CD4-positive, alpha-beta memory T cell (primary cell): ENCODE measurements at regions of chr17 and their contacts with region 1.

Region 1: DNA sequence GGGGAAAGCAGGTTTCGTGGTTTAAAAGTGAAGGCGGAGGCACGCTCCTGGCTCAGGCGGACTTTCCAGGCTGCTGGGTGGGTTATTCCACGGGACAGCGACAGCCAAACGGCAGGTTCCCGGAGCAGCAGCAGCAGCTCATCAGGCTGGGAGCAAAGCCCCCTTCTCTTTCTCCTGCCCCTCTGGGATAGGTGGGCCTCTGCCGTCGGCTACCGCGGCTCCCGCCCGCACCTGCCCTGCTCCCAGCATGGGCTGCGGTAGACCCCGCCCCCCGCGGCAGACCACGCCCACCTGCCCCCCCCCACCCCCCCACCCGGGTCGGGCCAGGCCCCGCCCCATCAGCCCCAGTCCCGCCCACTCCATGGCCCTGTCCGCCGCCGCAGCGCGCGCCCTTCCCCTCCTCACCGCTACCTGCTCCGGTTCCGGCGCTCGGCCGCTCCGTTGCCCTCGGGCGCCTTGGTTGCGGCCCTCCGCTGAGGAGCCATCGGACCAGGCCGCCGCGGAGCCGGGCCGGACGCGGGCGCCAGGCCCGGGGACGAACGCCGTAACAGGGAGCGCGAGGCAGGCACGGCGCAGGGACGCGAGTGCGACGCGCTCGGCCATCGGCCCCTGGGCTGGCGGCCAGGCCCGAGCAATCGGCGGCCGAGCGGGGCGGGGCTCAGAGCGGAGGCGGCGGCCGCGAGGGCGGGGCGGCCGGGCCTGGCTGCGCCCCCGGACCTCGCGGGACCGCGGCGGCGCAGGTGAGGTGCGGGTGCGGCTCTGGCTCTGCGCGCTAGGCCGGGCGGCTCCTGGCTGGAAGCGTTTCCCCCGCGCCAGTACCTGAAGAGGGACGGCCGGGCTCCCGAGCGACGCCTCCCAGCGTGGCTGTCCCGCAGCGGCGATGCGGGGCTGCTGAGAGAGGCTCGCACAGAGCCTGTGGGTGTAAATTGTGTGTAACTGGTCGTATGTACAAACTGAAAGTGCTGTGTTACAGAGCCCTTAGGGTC is at the starts of genes HEXD and OGFOD3:
- DNase-seq: peak; percentile 82 to 96 (median 92)
- H3K4me3 ChIP-seq: peak within 1 kb of the TSS; percentile 55 to 58
- H3K4me3 Mint-ChIP-seq: peak within 1 kb of the TSS; percentile 82 to 90 (median 85)
- H3K27ac ChIP-seq: peak within 1 kb of the TSS; percentile 66
- H3K27ac Mint-ChIP-seq: peak within 1 kb of the TSS; percentile 75 to 91 (median 84)
- H3K4me1 ChIP-seq: peaks cover 32% of the 10 kb centered on the region
- H3K4me1 Mint-ChIP-seq: peaks cover 22 to 39% (median 27%) of the 10 kb centered on the region in 4 donors
- H3K27me3 ChIP-seq: no peaks in the 10 kb centered on the region
- H3K27me3 Mint-ChIP-seq: no peaks in the 10 kb centered on the region
- total RNA-seq, gene HEXD: 105 to 113 TPM
- total RNA-seq, gene OGFOD3: 28.8 to 30.3 TPM

Region 2: DNA sequence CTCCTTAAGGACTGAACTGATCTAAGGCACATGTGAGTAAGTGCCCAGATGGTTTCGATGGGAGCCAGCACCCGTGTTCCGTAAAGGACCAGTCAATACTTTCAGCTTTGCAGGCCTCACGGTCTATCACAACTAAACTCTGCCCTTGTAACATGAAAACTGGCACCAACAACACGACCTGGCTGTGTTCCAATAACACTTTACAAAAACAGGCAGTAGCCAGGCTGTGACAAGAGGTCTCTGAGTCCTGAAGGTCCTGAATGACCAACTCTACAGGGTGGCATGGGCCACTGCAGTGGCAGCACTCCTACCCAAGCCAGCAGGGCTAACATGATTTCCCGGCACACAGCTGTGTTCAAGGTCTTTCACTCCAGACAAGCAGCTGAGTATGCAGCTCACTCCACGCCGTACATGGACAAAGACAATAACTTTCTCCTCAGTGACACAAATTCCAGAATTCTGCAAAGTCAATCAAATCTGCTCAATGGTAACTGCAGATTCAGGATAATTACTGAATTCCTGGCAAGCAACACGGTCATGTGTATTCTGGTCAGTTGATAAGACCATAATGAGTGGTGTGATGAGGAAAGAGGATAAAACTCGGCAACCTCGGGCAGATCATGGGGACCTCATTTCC is 796.7 kb before region 1 on chr17:
- CTCF ChIA-PET with region 1: no interaction called
- POLR2A ChIA-PET with region 1: no interaction called
- intact Hi-C with region 1: no loop called
- DNase-seq: no peak
- H3K4me3 ChIP-seq: no peak overlapping the region
- H3K4me3 Mint-ChIP-seq: no peak overlapping the region
- H3K27ac ChIP-seq: no peak overlapping the region
- H3K27ac Mint-ChIP-seq: no peak overlapping the region
- H3K4me1 ChIP-seq: no peaks in the 10 kb centered on the region
- H3K4me1 Mint-ChIP-seq: peaks cover 0 to 22% (median 12%) of the 10 kb centered on the region in 4 donors
- H3K27me3 ChIP-seq: no peaks in the 10 kb centered on the region
- H3K27me3 Mint-ChIP-seq: no peaks in the 10 kb centered on the region

Region 3: DNA sequence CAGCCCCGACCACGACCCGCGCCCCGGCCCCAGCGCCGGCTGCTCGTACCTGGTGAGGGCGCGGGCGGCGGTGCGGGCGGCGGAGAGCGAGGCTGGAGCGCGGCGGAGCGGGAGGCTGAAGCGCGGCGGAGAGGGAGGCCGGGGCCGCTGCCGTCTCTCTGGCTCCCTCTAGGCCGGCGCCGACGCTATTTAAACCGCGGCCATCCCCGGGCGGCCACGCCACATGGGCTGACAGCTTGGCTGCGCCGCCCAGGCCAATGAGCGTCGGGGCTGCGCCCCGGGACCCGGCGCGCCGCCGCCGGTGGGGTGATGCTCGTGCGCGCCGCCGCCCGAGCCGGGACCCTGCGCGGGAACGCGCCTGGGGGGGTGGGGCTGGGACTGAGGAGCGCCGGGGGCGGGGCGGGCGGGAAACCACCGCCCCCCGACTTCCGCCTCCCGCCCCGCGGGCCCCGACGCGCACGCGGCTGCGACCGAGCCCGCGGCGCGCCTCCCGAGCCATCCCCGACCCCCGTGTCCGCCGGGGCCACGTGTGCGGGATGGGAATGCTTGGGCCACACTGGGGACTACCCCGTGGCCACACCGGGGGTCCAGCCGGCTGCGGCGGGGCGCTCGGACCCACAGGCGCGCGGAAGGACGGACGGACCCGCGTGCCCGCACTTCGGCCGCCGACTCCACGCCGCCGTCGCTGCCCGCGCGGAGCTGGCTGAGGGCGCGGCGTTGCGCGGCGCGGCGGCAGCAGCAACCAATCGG is 320.0 kb before region 1 on chr17 and contains the start of gene FASN:
- CTCF ChIA-PET with region 1: no interaction called
- POLR2A ChIA-PET with region 1: no interaction called
- intact Hi-C with region 1: loop called (anchors 2 kb)
- DNase-seq: peak; percentile 88 to 94 (median 91)
- H3K4me3 ChIP-seq: peak within 1 kb of the TSS; percentile 23 to 66
- H3K4me3 Mint-ChIP-seq: peak within 1 kb of the TSS; percentile 35 to 82 (median 68)
- H3K27ac ChIP-seq: peak within 1 kb of the TSS; percentile 78
- H3K27ac Mint-ChIP-seq: peak within 1 kb of the TSS in 4 of 7 donors; percentile 22 to 86 (median 26)
- H3K4me1 ChIP-seq: peaks cover 20% of the 10 kb centered on the region
- H3K4me1 Mint-ChIP-seq: peaks cover 0 to 20% (median 2%) of the 10 kb centered on the region in 4 donors
- H3K27me3 ChIP-seq: no peaks in the 10 kb centered on the region
- H3K27me3 Mint-ChIP-seq: no peaks in the 10 kb centered on the region
- total RNA-seq, gene FASN: 26.5 to 27.7 TPM

Region 4: GRCh38 chr17:82236142-82236981 is 181.9 kb before region 1 on chr17:
- CTCF ChIA-PET with region 1: interaction called, 4 read pairs
- POLR2A ChIA-PET with region 1: no interaction called
- intact Hi-C with region 1: loop called (anchors 5 kb)
- DNase-seq: peak; percentile 69 to 74 (median 72)
- H3K4me3 ChIP-seq: no peak overlapping the region
- H3K4me3 Mint-ChIP-seq: peak overlapping the region in 1 of 8 donors; percentile 35
- H3K27ac ChIP-seq: peak overlapping the region; percentile 15
- H3K27ac Mint-ChIP-seq: peak overlapping the region in 5 of 7 donors; percentile 41 to 67 (median 64)
- H3K4me1 ChIP-seq: peaks cover 63% of the 10 kb centered on the region
- H3K4me1 Mint-ChIP-seq: peaks cover 10 to 58% (median 39%) of the 10 kb centered on the region in 4 donors
- H3K27me3 ChIP-seq: no peaks in the 10 kb centered on the region
- H3K27me3 Mint-ChIP-seq: no peaks in the 10 kb centered on the region

Region 5: DNA sequence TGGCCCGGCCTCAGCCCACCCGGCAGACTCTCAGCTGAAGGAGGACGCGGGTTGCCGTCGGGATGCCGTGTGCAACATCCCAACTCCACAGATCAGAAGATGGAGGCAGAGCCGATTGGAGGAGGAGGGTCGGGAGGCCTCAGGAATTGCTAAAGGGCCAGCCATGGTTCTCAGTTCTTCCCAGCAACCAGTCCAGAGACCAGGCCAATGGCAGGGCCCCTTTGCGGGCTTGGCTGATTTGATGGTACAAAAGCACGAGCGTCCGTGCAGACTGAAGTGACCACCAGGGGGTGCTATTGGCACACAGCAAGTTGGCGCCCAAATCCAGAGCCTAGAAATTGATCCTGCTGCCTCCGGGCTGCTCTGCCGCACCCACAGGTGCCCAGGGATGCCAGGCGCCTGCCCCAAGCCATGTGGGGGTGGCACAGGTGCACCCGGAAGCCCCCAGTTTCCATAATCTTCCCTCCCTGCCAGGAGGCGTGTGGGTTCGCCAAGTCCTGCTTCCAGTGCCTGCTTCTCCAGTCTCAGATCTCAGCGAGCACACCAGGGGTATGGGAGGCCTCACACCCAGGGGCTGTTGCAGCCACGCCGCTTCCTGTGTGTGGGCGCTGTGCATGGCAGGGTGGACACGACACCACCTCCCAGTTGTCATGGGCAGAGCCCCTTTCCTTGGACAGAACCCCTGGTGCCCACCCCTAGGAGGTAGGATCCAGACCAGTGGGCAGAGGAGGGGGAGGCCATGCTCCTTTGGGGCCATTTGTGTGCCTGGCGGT is 66.4 kb before region 1 on chr17:
- CTCF ChIA-PET with region 1: interaction called, 52 read pairs
- POLR2A ChIA-PET with region 1: no interaction called
- intact Hi-C with region 1: loop called (anchors 1 kb)
- DNase-seq: peak; percentile 77 to 81 (median 79)
- H3K4me3 ChIP-seq: no peak overlapping the region
- H3K4me3 Mint-ChIP-seq: no peak overlapping the region
- H3K27ac ChIP-seq: no peak overlapping the region
- H3K27ac Mint-ChIP-seq: peak overlapping the region in 1 of 7 donors; percentile 83
- H3K4me1 ChIP-seq: no peaks in the 10 kb centered on the region
- H3K4me1 Mint-ChIP-seq: peaks cover 0 to 6% (median 4%) of the 10 kb centered on the region in 4 donors
- H3K27me3 ChIP-seq: no peaks in the 10 kb centered on the region
- H3K27me3 Mint-ChIP-seq: peaks cover 2 to 10% of the 10 kb centered on the region in 2 donors

Region 6: GRCh38 chr17:82457997-82458864 is 39.9 kb after region 1 on chr17 and contains the start of gene NARF:
- CTCF ChIA-PET with region 1: interaction called, 4 read pairs
- POLR2A ChIA-PET with region 1: interaction called, 18 read pairs
- intact Hi-C with region 1: loop called (anchors 1 kb)
- DNase-seq: peak; percentile 95 to 97 (median 97)
- H3K4me3 ChIP-seq: peak within 1 kb of the TSS; percentile 29 to 59
- H3K4me3 Mint-ChIP-seq: peak within 1 kb of the TSS; percentile 84 to 96 (median 92)
- H3K27ac ChIP-seq: peak within 1 kb of the TSS; percentile 94
- H3K27ac Mint-ChIP-seq: peak within 1 kb of the TSS; percentile 94 to 100 (median 97)
- H3K4me1 ChIP-seq: peaks cover 31% of the 10 kb centered on the region
- H3K4me1 Mint-ChIP-seq: peaks cover 19 to 36% (median 26%) of the 10 kb centered on the region in 4 donors
- H3K27me3 ChIP-seq: no peaks in the 10 kb centered on the region
- H3K27me3 Mint-ChIP-seq: no peaks in the 10 kb centered on the region
- total RNA-seq, gene NARF: 80.8 to 82.9 TPM

Region 7: GRCh38 chr17:82551779-82552457 is 133.6 kb after region 1 on chr17:
- CTCF ChIA-PET with region 1: interaction called, 3 read pairs
- POLR2A ChIA-PET with region 1: no interaction called
- intact Hi-C with region 1: loop called (anchors 1 kb)
- DNase-seq: peak; percentile 72 to 82 (median 76)
- H3K4me3 ChIP-seq: no peak overlapping the region
- H3K4me3 Mint-ChIP-seq: peak overlapping the region in 1 of 8 donors; percentile 24
- H3K27ac ChIP-seq: no peak overlapping the region
- H3K27ac Mint-ChIP-seq: peak overlapping the region; percentile 32 to 79 (median 57)
- H3K4me1 ChIP-seq: peaks cover 18% of the 10 kb centered on the region
- H3K4me1 Mint-ChIP-seq: peaks cover 24 to 55% (median 33%) of the 10 kb centered on the region in 4 donors
- H3K27me3 ChIP-seq: no peaks in the 10 kb centered on the region
- H3K27me3 Mint-ChIP-seq: no peaks in the 10 kb centered on the region